SK-N-SH (cell line): ENCODE measurements at regions of chr10 and their contacts with region 1.

Region 1: GRCh38 chr10:97612386-97612785 is 20.9 kb downstream of the MORN4 start:
- DNase-seq: peak; percentile 45
- H3K4me3 ChIP-seq: no peak overlapping the region
- H3K27ac ChIP-seq: no peak overlapping the region
- H3K4me1 ChIP-seq: no peaks in the 10 kb centered on the region; a peak in 1 of 4 replicates
- H3K27me3 ChIP-seq: no peaks in the 10 kb centered on the region
- CTCF ChIP-seq: peak; percentile 68
- EP300 ChIP-seq: no peak
- RAD21 ChIP-seq: peak; percentile 76

Region 2: GRCh38 chr10:97596101-97597062 is 16.0 kb before region 1 on chr10:
- CTCF ChIA-PET with region 1: interaction called, 16 read pairs
- POLR2A ChIA-PET with region 1: no interaction called
- DNase-seq: peak; percentile 29
- H3K4me3 ChIP-seq: peak overlapping the region in 1 of 2 experiments; percentile 7; a peak in 1 of 4 replicates
- H3K27ac ChIP-seq: peak overlapping the region; percentile 11 to 91; a peak in 3 of 4 replicates
- H3K4me1 ChIP-seq: peaks cover 3 to 23% of the 10 kb centered on the region in 2 experiments; a peak in 3 of 4 replicates
- H3K27me3 ChIP-seq: no peaks in the 10 kb centered on the region
- CTCF ChIP-seq: 0 out of 2 replicates have a peak, but pooled peaks have one; percentile 11
- EP300 ChIP-seq: peak in 1 of 2 experiments; percentile 55; a peak in 1 of 4 replicates
- RAD21 ChIP-seq: no peak